Naive thymus-derived CD4-positive, alpha-beta T cell (primary cell): ENCODE measurements at regions of chr5 and their contacts with region 1.

Region 1: GRCh38 chr5:112860929-112861637 is at the start of gene SRP19:
- DNase-seq: peak; percentile 78 to 93 (median 90)
- ATAC-seq: peak; percentile 96
- H3K4me3 ChIP-seq: peak within 1 kb of the TSS; percentile 88
- H3K4me3 Mint-ChIP-seq: peak within 1 kb of the TSS; percentile 91 to 97 (median 96)
- H3K27ac ChIP-seq: peak within 1 kb of the TSS; percentile 89
- H3K27ac Mint-ChIP-seq: peak within 1 kb of the TSS; percentile 95 to 99 (median 97)
- H3K4me1 ChIP-seq: peaks cover 19% of the 10 kb centered on the region in 2 donors
- H3K4me1 Mint-ChIP-seq: peaks cover 5 to 41% (median 32%) of the 10 kb centered on the region in 7 donors
- H3K27me3 ChIP-seq: no peaks in the 10 kb centered on the region
- H3K27me3 Mint-ChIP-seq: peaks cover 5 to 18% (median 6%) of the 10 kb centered on the region in 5 donors
- total RNA-seq, gene SRP19: 34.2 to 70.9 (median 41.5) TPM

Region 2: DNA sequence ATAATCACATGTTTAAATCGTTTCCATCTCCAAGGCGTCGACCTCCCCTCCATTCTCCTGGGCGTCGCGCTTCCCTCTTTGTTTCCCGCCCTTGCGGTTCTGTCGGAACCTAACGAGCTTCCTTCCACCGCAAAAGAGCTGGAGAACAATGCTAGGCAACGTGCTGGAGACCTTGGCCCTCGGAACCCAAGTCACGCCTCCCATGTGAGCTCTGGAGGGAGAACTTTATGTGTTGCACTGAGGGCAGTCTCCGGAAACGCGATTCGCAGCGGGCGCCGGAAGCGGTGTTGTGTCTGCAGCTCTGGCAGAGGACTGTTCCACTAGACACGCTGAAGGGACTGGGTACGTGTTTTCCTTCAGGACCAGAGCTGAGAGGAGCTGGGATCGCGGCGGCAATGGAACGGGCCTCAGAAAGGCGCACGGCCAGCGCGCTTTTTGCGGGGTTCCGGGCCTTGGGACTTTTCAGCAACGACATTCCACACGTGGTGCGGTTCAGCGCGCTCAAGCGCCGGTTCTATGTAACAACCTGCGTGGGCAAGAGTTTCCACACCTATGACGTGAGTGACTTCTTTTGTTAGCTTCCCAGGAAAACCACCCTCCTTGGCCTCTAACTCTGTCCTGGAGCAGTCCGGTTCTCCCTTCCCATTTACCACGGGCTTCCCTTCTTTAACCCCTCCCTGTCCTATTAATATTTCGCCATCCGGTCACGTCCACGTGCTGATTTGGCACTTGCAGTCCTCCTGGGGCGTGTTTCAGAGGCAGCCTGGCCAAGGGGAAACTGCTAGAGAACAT is 1768.8 kb before region 1 on chr5 and contains the start of gene WDR36:
- CTCF ChIA-PET with region 1: no interaction called
- POLR2A ChIA-PET with region 1: no interaction called
- intact Hi-C with region 1: loop called in 1 of 2 experiments (anchors 2 kb)
- DNase-seq: peak; percentile 80 to 95 (median 87)
- ATAC-seq: peak; percentile 99
- H3K4me3 ChIP-seq: peak within 1 kb of the TSS; percentile 88
- H3K4me3 Mint-ChIP-seq: peak within 1 kb of the TSS; percentile 91 to 99 (median 98)
- H3K27ac ChIP-seq: peak within 1 kb of the TSS; percentile 82
- H3K27ac Mint-ChIP-seq: peak within 1 kb of the TSS; percentile 66 to 98 (median 94)
- H3K4me1 ChIP-seq: peaks cover 11 to 20% of the 10 kb centered on the region in 2 donors
- H3K4me1 Mint-ChIP-seq: peaks cover 22 to 49% (median 39%) of the 10 kb centered on the region in 7 donors
- H3K27me3 ChIP-seq: no peaks in the 10 kb centered on the region
- H3K27me3 Mint-ChIP-seq: peaks cover 0 to 12% (median 5%) of the 10 kb centered on the region in 5 donors
- total RNA-seq, gene WDR36: 24.8 to 37.4 (median 29.7) TPM

Region 3: GRCh38 chr5:112878760-112879159 is 17.7 kb after region 1 on chr5:
- CTCF ChIA-PET with region 1: no interaction called
- POLR2A ChIA-PET with region 1: interaction called, 3 read pairs
- intact Hi-C with region 1: loop called (anchors 1 to 2 kb)
- DNase-seq: peak in 6 of 9 donors; percentile 5 to 58 (median 14)
- ATAC-seq: peak; percentile 69
- H3K4me3 ChIP-seq: peak overlapping the region; percentile 8
- H3K4me3 Mint-ChIP-seq: peak overlapping the region in 6 of 10 donors; percentile 1 to 67 (median 16)
- H3K27ac ChIP-seq: peak overlapping the region; percentile 15
- H3K27ac Mint-ChIP-seq: peak overlapping the region in 8 of 9 donors; percentile 1 to 90 (median 68)
- H3K4me1 ChIP-seq: peaks cover 5 to 21% of the 10 kb centered on the region in 2 donors
- H3K4me1 Mint-ChIP-seq: peaks cover 22 to 42% (median 30%) of the 10 kb centered on the region in 7 donors
- H3K27me3 ChIP-seq: no peaks in the 10 kb centered on the region
- H3K27me3 Mint-ChIP-seq: no peaks in the 10 kb centered on the region

Region 4: DNA sequence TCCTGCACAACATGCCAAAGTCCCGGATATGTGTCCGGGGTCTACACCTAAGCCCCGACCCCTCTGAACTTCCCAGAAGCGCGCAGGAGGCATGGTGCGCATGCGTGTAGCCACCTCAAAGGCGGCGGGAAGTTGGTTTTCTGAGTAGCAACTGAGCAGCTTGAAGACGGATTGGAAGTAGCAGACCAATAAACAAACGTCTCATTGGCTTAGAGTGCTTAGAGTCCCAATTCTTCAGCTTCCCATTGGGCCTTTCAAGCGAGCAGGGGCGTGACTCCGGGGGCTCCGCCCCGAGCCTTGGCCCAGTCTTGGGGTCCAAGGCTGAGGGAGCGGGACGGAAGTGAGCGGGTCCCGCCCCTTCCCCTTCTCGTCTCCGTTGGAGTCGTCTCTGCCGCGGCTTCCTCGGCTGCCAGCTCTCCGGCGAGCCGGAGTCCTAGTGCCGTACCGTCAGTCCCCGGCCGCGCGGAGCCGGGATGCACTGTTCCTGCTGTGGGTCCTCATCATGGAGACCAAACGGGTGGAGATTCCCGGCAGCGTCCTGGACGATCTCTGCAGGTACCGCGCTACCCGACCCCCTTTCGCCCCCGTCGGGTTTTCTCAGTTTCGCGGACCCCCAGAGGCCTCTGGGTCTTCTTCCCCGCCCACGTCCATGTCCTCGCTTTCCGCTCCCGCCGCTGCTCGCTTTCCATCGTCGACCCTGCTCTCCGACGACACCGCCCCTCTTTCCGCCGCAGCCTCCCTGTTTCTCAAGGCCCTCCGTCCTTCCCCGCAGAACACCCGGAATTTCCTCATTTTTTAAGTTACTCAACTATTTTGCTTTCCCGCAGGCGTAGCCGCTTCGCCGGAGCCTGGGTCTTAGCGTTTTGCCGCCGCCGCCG is 115.6 kb after region 1 on chr5 and contains the start of gene DCP2:
- CTCF ChIA-PET with region 1: no interaction called
- POLR2A ChIA-PET with region 1: interaction called, 8 read pairs
- intact Hi-C with region 1: loop called (anchors 1 kb)
- DNase-seq: peak; percentile 84 to 98 (median 97)
- ATAC-seq: peak; percentile 98
- H3K4me3 ChIP-seq: peak within 1 kb of the TSS; percentile 75
- H3K4me3 Mint-ChIP-seq: peak within 1 kb of the TSS; percentile 88 to 99 (median 98)
- H3K27ac ChIP-seq: peak within 1 kb of the TSS; percentile 83
- H3K27ac Mint-ChIP-seq: peak within 1 kb of the TSS; percentile 89 to 98 (median 95)
- H3K4me1 ChIP-seq: peaks cover 7 to 21% of the 10 kb centered on the region in 2 donors
- H3K4me1 Mint-ChIP-seq: peaks cover 35 to 54% (median 51%) of the 10 kb centered on the region in 7 donors
- H3K27me3 ChIP-seq: no peaks in the 10 kb centered on the region
- H3K27me3 Mint-ChIP-seq: no peaks in the 10 kb centered on the region
- total RNA-seq, gene DCP2: 60.2 to 101 (median 85.1) TPM

Region 5: DNA sequence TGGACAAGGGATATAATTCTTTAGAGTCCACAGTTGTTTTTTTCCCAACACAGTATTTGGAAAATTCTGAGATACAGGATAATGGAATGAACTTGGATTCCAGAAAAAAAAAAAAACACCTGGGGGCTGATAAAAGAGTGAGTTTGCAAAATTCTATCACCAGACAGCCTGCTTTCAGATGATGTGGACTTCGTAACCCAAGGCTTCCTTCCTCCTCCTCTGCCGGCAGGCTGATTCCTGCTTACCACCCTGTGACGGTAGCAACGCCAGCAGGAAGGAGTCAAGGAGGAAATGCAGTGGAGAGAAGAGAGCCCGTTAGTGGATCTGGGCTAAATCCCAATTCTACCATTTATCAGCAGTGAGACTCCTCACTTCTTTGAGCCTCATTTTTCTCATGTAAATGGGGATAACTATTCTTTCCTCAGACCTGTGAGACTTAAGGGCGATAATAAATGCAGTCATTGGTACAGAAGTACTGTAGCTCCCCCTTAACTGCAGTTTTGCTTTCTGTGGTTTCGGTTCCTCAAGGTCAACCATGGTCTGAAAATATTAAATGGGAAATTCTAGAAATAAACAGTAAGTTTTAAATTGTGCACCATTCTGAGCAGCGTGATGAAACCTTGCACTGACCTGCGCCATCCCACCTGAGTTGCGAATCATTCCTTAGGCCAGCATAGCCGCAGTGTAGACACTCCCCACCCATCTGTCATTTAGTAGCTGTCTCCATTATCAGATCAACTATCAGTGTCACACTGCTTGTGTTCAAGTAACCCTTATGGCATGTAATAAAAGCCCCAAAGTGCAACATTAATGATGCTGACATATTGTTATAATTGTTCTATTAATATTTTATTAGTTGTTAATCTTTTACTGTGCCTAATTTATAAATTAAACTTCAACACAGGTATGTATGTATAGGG is 186.9 kb after region 1 on chr5:
- CTCF ChIA-PET with region 1: no interaction called
- POLR2A ChIA-PET with region 1: no interaction called
- intact Hi-C with region 1: no loop called
- DNase-seq: no peak
- ATAC-seq: peak; percentile 67
- H3K4me3 ChIP-seq: no peak overlapping the region
- H3K4me3 Mint-ChIP-seq: no peak overlapping the region
- H3K27ac ChIP-seq: no peak overlapping the region
- H3K27ac Mint-ChIP-seq: peak overlapping the region in 1 of 9 donors; percentile 15
- H3K4me1 ChIP-seq: no peaks in the 10 kb centered on the region
- H3K4me1 Mint-ChIP-seq: peaks cover 0 to 29% (median 5%) of the 10 kb centered on the region in 7 donors
- H3K27me3 ChIP-seq: no peaks in the 10 kb centered on the region
- H3K27me3 Mint-ChIP-seq: no peaks in the 10 kb centered on the region

Region 6: DNA sequence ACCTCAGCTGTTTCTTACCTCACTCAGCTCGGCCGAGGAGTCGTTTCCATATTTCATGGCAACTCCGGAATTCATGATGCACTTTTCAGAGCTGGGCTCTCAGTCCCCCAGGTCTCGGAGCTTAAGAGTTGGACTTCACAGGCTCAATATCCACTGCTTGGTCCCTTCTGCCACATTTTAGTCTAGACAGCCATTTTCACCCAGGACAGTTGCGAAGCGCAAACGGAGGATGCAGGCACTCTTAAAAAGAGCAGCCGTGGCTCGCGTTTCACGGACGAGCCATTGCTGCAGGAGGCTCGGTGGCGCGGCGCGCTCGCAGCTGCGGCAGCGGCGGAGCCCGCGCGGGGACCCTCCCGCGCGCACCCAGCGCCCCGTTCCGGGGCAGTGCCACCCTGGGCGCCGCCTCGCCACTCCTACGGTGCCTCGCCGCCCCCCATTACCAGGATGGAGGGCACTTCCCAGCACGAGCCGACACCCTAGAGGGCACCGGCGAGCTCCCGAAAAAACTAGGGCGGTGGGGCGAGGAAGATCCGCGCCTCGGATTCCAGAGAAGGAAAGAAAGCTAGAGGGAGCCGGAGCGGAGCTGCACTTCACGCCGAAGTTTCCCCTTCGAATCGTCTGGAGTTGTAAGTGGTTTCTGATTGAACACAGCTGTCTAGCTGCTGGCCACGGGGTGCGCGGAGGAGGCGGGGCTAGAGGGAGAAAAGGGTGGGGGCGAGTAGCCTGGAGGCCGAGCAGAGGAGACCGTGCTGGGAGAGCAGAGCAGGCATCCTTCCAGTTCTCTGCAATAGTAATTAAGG is 433.4 kb after region 1 on chr5:
- CTCF ChIA-PET with region 1: no interaction called
- POLR2A ChIA-PET with region 1: no interaction called
- intact Hi-C with region 1: loop called in 1 of 2 experiments (anchors 5 kb)
- DNase-seq: peak; percentile 30 to 72 (median 62)
- ATAC-seq: peak; percentile 92
- H3K4me3 ChIP-seq: peak overlapping the region; percentile 64
- H3K4me3 Mint-ChIP-seq: peak overlapping the region; percentile 88 to 96 (median 92)
- H3K27ac ChIP-seq: peak overlapping the region; percentile 43
- H3K27ac Mint-ChIP-seq: peak overlapping the region in 6 of 9 donors; percentile 21 to 86 (median 46)
- H3K4me1 ChIP-seq: peaks cover 8 to 11% of the 10 kb centered on the region in 2 donors
- H3K4me1 Mint-ChIP-seq: peaks cover 13 to 28% (median 21%) of the 10 kb centered on the region in 7 donors
- H3K27me3 ChIP-seq: no peaks in the 10 kb centered on the region
- H3K27me3 Mint-ChIP-seq: peaks cover 30 to 82% (median 59%) of the 10 kb centered on the region in 5 donors